Activated CD4-positive, alpha-beta T cell treated with anti-CD3 and anti-CD28 coated beads, Interleukin-2, amount 10 ng/mL, durations not matched to agents 24 days and 14 days (primary cell): ENCODE measurements at regions of chr10 and their contacts with region 1.

Region 1: DNA sequence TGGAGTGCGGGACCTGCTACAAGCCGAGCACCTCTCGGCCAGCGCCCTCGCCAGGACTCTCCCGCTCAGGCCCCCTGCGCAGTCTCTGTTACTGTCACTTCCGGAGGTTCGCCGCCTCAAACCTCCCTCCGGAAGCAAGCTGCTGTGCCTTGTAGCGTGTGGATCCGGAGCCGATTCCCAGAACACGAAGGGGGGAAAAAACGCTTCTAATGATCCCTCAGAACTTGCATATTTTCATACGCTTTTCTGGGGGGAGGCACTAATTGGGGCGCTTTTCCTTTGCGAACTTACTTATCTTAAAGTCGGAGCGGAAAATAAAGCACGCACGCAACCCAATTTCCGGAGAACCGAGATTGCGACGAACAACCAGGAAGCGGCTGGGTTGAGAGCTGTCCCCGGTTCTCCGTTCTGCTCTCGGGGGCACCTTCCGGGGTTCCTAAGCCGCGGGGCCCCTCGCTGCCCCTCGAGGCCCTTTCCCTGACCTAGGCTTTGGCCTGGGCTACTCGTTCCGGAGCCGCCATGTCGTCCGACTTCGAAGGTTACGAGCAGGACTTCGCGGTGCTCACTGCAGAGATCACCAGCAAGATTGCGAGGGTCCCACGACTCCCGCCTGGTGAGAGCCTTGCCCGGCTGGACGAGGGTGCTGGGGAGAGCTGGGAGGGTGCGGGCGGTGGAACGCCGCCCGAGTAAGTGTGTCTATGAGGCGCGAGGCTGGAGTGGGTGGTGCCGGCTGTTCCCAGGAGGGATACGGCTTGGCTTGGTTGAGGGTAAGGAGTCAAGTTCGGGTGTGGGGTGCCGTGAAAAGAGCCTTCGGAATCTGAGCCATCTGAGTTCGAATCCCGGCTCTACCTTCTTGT is at the starts of genes VTI1A and ZDHHC6:
- DNase-seq: peak; percentile 96
- H3K4me3 Mint-ChIP-seq: peak within 1 kb of the TSS; percentile 92
- H3K27ac Mint-ChIP-seq: peak within 1 kb of the TSS; percentile 93
- H3K4me1 Mint-ChIP-seq: peaks cover 32% of the 10 kb centered on the region
- H3K27me3 Mint-ChIP-seq: no peaks in the 10 kb centered on the region
- total RNA-seq, gene VTI1A: 35.2 and 38.4 TPM in 2 replicates
- total RNA-seq, gene ZDHHC6: 45.5 and 47.7 TPM in 2 replicates

Region 2: DNA sequence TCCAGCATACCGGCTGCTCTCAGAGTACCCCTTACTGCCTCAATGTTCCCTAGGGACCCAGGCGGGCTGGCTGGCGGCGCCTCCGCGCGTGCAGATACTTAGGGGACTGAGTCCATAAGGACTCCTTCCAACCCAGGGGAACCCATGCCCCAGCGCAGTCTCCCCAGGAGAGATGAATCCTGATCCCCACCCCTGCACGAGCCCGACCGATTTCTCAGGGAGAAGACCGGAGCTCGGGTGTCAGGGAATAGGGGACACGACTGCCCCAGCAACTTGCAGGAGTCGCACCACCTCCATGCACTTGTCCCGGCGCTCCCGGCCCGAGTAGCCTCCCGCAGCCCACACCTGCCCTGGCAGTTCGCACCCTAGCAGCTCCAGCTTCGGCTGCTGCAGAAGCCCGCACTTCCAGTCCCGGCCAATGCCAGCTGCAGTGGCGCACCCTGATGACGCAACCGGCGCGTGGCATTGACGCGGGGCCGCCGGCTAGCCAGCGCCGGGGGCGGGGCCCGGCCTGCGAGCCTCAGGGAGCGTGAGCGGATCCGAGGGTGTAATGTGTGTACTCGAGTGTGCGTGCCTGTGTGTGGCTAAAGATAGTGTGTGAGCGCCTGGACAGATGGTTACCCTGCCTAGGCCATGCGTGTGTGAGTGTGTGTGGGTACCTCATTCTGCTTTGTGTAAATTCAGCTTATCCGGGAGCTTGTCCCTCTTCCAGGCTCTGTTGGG is 263.6 kb before region 1 on chr10 and contains the start of gene GPAM:
- intact Hi-C with region 1: loop called (anchors 1 kb)
- DNase-seq: peak; percentile 100
- H3K4me3 Mint-ChIP-seq: peak within 1 kb of the TSS; percentile 88
- H3K27ac Mint-ChIP-seq: peak within 1 kb of the TSS; percentile 88
- H3K4me1 Mint-ChIP-seq: peaks cover 26% of the 10 kb centered on the region
- H3K27me3 Mint-ChIP-seq: peaks cover 11% of the 10 kb centered on the region
- total RNA-seq, gene GPAM: 8.6 and 9.8 TPM in 2 replicates

Region 3: GRCh38 chr10:112375721-112376395 is 71.2 kb before region 1 on chr10:
- intact Hi-C with region 1: loop called (anchors 1 kb)
- DNase-seq: peak; percentile 88
- H3K4me3 Mint-ChIP-seq: peak overlapping the region; percentile 100
- H3K27ac Mint-ChIP-seq: peak overlapping the region; percentile 100
- H3K4me1 Mint-ChIP-seq: peaks cover 52% of the 10 kb centered on the region
- H3K27me3 Mint-ChIP-seq: no peaks in the 10 kb centered on the region

Region 4: GRCh38 chr10:112389147-112389822 is 57.8 kb before region 1 on chr10:
- intact Hi-C with region 1: loop called (anchors 2 kb)
- DNase-seq: peak; percentile 84
- H3K4me3 Mint-ChIP-seq: peak overlapping the region; percentile 70
- H3K27ac Mint-ChIP-seq: peak overlapping the region; percentile 88
- H3K4me1 Mint-ChIP-seq: peaks cover 47% of the 10 kb centered on the region
- H3K27me3 Mint-ChIP-seq: no peaks in the 10 kb centered on the region

Region 5: DNA sequence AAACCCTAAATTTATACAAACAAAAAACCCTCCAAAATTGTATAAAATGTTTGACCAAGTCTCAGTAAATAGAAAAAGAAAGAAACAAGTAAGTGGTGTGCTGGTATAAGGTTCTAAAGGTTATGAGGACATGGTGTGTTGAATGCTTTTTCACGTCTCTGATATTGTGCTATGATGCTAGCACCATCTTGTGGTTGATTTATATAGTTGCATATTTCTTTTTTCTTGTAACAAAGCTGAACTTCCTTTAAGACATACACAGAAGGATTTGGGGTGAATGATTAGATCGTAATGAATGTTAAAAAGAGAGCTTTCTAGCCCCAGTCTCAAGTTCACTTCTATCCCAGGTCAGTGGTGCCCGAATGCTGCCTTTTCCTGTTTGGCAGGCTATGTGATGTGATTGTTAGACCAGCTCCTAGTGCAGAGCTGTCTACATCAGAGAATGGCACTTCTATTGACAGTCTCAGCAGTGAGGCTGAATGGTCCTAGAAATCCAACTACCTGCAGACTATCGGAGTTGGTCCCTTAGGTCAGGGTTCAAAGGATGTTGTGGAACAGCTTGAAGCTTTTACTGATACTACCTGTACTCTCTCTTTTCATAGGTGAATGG is 24.9 kb after region 1 on chr10:
- intact Hi-C with region 1: loop called (anchors 1 kb)
- DNase-seq: peak; percentile 60
- H3K4me3 Mint-ChIP-seq: no peak overlapping the region
- H3K27ac Mint-ChIP-seq: no peak overlapping the region
- H3K4me1 Mint-ChIP-seq: peaks cover 4% of the 10 kb centered on the region
- H3K27me3 Mint-ChIP-seq: no peaks in the 10 kb centered on the region